A673 (cell line): ENCODE measurements at regions of chr11 and their contacts with region 1.

Region 1: GRCh38 chr11:45551191-45551713 is 114.2 kb downstream of the CHST1 start:
- DNase-seq: no peak
- H3K4me3 ChIP-seq: no peak overlapping the region
- H3K27ac ChIP-seq: no peak overlapping the region
- H3K4me1 ChIP-seq: no peaks in the 10 kb centered on the region
- H3K27me3 ChIP-seq: peaks cover 14% of the 10 kb centered on the region
- CTCF ChIP-seq: no peak

Region 2: DNA sequence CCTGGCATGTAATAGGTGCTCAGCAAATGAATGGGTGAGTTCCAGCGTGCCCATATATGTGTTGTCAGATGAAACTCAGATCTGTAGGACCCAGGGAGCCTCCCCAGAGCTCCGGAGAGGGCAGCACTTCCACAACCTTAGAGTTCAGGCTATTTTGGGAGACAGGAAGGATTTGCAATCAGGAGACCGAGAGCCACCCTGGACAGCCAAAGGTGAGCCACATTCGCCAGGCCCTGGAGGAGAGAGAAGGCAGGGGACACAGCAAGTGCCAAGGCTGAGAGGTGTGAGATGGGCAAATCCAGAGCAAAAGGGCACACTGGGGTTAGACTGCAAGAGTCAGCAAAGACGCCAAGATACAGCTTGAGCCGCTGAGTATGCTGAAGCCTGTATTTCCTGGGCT is 919.4 kb before region 1 on chr11:
- CTCF ChIA-PET with region 1: interaction called, 10 read pairs
- POLR2A ChIA-PET with region 1: no interaction called
- intact Hi-C with region 1: no loop called
- DNase-seq: no peak
- H3K4me3 ChIP-seq: no peak overlapping the region
- H3K27ac ChIP-seq: no peak overlapping the region
- H3K4me1 ChIP-seq: peaks cover 9% of the 10 kb centered on the region
- H3K27me3 ChIP-seq: no peaks in the 10 kb centered on the region
- CTCF ChIP-seq: no peak

Region 3: GRCh38 chr11:46055371-46055770 is 504.1 kb after region 1 on chr11:
- CTCF ChIA-PET with region 1: no interaction called
- POLR2A ChIA-PET with region 1: no interaction called
- intact Hi-C with region 1: no loop called
- DNase-seq: no peak
- H3K4me3 ChIP-seq: no peak overlapping the region
- H3K27ac ChIP-seq: no peak overlapping the region
- H3K4me1 ChIP-seq: peaks cover 17% of the 10 kb centered on the region
- H3K27me3 ChIP-seq: no peaks in the 10 kb centered on the region
- CTCF ChIP-seq: no peak